ENCODE measurements at regions of chr20 and their contacts with region 1.

Region 1: GRCh38 chr20:35490736-35491181 is 35.4 kb downstream of the CEP250 start:
- DNase-seq: peak; percentile 87
- ATAC-seq: peak; percentile 96
- H3K4me3 Mint-ChIP-seq: peak overlapping the region; percentile 99
- H3K27ac Mint-ChIP-seq: peak overlapping the region; percentile 99
- H3K4me1 Mint-ChIP-seq: peaks cover 53% of the 10 kb centered on the region
- H3K27me3 Mint-ChIP-seq: no peaks in the 10 kb centered on the region

Region 2: DNA sequence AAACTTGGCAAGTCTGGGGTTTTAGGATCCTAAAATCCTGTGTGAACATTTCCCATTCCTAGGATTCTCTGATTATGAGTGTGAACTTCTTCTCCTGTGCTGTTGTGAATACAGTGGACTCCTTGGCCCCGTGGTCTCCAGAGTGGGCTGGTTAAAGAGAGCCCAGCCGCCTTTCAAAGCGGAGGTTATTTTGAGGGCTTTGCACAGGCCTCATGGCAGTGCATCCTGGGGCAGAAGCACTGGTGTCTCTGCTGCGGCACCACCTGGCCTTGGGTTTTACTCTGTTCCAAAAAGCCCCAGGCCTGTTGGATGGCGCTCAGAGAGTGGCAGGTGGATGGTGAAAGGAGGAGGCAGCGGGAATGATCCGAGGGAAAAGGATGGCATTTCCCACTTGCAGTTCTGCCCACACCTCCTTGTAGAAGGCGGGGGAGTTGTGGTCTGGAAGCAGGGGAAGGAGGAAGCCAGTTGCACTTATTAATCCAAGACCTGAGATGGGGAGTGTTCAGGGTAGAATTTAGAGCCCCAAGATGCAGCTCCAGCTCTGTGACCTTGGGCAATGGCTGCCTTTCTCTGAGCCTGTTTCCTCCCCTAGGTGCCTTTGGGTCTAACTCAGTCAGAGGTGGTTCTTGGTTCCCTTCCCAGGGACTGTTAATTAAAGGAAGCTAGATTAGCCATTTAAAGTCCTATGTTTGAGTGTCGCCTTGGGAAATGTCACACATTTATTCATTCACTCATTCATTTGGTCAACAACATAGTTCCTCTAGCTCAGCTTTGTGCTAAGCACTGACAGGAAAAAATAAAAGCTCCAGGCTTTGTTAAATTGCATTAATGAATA is 241.9 kb before region 1 on chr20:
- CTCF ChIA-PET with region 1: no interaction called
- POLR2A ChIA-PET with region 1: no interaction called
- DNase-seq: no peak
- ATAC-seq: no peak
- H3K4me3 Mint-ChIP-seq: no peak overlapping the region
- H3K27ac Mint-ChIP-seq: no peak overlapping the region
- H3K4me1 Mint-ChIP-seq: peaks cover 31% of the 10 kb centered on the region
- H3K27me3 Mint-ChIP-seq: no peaks in the 10 kb centered on the region

Region 3: DNA sequence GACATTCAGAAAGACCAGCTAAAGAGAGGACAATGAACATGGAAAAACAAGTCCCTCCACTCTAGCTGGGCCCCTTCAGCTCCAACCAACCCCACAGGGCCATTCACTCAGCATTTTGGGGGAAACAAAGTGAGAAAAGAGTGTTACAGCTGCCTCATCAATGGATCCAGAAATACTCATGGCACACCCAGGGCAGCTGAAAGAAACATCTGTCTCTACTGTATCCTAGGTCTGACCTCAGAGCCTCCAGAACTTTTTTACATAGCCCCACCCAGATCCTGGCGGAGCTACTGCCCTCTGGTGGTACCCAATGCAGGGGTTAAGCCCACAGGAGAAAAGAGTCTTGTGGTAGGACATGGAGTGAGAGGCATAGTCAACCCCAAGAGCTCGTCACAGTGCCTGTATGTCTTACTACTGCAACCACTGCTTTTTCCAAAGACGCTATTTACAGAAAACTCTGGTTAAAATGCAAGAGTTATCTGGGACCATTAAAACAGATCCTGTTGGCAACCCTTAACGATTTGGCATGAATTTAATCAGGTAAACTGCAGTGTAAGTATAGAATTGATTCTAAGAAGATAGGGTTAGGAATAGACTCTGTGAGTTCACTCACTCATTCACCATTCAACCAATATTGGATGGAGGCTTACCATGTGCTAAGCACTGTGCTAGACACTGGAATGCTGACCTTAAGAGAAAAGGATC is 161.2 kb before region 1 on chr20:
- CTCF ChIA-PET with region 1: no interaction called
- POLR2A ChIA-PET with region 1: no interaction called
- DNase-seq: peak; percentile 60
- ATAC-seq: peak; percentile 90
- H3K4me3 Mint-ChIP-seq: no peak overlapping the region
- H3K27ac Mint-ChIP-seq: no peak overlapping the region
- H3K4me1 Mint-ChIP-seq: peaks cover 3% of the 10 kb centered on the region
- H3K27me3 Mint-ChIP-seq: no peaks in the 10 kb centered on the region

Region 4: GRCh38 chr20:35454881-35455609 is 35.7 kb before region 1 on chr20 and contains the start of gene CEP250:
- CTCF ChIA-PET with region 1: interaction called, 4 read pairs
- POLR2A ChIA-PET with region 1: interaction called, 40 read pairs
- DNase-seq: peak; percentile 96
- ATAC-seq: peak; percentile 98
- H3K4me3 Mint-ChIP-seq: peak within 1 kb of the TSS; percentile 89
- H3K27ac Mint-ChIP-seq: peak within 1 kb of the TSS; percentile 98
- H3K4me1 Mint-ChIP-seq: peaks cover 33% of the 10 kb centered on the region
- H3K27me3 Mint-ChIP-seq: no peaks in the 10 kb centered on the region
- total RNA-seq, gene CEP250: 72.1 to 74.5 TPM

Region 5: GRCh38 chr20:35478804-35479472 is 11.8 kb before region 1 on chr20:
- CTCF ChIA-PET with region 1: interaction called, 4 read pairs
- POLR2A ChIA-PET with region 1: interaction called, 16 read pairs
- DNase-seq: peak; percentile 26
- ATAC-seq: no peak
- H3K4me3 Mint-ChIP-seq: no peak overlapping the region
- H3K27ac Mint-ChIP-seq: no peak overlapping the region
- H3K4me1 Mint-ChIP-seq: peaks cover 2% of the 10 kb centered on the region
- H3K27me3 Mint-ChIP-seq: no peaks in the 10 kb centered on the region

Region 6: DNA sequence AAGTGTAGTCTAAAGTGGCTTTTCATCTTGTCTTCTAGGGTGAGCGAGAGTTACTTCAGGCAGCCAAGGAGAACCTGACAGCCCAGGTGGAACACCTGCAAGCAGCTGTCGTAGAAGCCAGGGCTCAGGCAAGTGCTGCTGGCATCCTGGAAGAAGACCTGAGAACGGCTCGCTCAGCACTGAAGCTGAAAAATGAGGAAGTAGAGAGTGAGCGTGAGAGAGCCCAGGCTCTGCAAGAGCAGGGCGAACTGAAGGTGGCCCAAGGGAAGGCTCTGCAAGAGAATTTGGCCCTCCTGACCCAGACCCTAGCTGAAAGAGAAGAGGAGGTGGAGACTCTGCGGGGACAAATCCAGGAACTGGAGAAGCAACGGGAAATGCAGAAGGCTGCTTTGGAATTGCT is 11.6 kb after region 1 on chr20:
- CTCF ChIA-PET with region 1: interaction called, 3 read pairs
- POLR2A ChIA-PET with region 1: interaction called, 24 read pairs
- DNase-seq: no peak
- ATAC-seq: no peak
- H3K4me3 Mint-ChIP-seq: no peak overlapping the region
- H3K27ac Mint-ChIP-seq: no peak overlapping the region
- H3K4me1 Mint-ChIP-seq: peaks cover 40% of the 10 kb centered on the region
- H3K27me3 Mint-ChIP-seq: no peaks in the 10 kb centered on the region

Region 7: GRCh38 chr20:35541783-35542588 is 51.2 kb after region 1 on chr20 and contains the start of gene ERGIC3:
- CTCF ChIA-PET with region 1: no interaction called
- POLR2A ChIA-PET with region 1: interaction called, 10 read pairs
- DNase-seq: peak; percentile 98
- ATAC-seq: peak; percentile 96
- H3K4me3 Mint-ChIP-seq: peak within 1 kb of the TSS; percentile 88
- H3K27ac Mint-ChIP-seq: peak within 1 kb of the TSS; percentile 90
- H3K4me1 Mint-ChIP-seq: peaks cover 23% of the 10 kb centered on the region
- H3K27me3 Mint-ChIP-seq: no peaks in the 10 kb centered on the region
- total RNA-seq, gene ERGIC3: 114 to 122 TPM

Region 8: DNA sequence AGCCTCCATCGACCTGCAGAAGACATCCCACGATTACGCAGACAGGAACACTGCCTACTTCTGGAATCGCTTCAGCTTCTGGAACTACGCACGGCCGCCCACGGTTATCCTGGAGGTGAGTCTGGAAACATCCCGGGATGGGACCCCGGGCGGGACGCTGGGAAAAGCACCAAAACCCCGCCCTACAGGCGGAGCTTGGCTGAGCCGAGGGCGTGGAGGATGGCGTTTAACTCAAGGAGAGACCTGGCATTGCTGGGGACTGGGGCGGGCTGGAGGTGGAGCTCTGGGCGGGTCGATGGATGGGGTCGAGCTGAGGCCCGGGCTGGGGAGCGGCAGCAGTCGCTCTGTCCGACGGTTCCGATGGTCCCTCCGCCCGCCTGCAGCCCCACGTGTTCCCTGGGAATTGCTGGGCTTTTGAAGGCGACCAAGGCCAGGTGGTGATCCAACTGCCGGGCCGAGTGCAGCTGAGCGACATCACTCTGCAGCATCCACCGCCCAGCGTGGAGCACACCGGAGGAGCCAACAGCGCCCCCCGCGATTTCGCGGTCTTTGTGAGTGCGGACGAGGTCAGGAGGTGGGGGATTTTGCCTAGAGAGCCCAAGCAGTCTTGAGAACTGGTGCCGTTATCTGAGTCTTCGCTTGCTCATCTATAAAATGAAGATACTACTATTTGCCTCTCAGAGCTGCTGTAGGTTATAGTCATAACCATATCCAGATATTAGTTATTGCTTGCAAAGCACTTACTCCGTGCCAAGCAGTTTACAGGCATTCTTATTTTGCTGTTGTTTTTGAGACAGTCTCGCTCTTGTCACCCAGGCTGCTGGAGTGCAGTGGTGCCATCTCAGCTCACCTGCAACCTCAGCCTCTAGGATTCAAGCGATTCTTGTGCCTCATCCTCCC is 128.7 kb after region 1 on chr20:
- CTCF ChIA-PET with region 1: interaction called, 10 read pairs
- POLR2A ChIA-PET with region 1: interaction called, 23 read pairs
- DNase-seq: peak; percentile 83
- ATAC-seq: peak; percentile 41
- H3K4me3 Mint-ChIP-seq: peak overlapping the region; percentile 84
- H3K27ac Mint-ChIP-seq: peak overlapping the region; percentile 81
- H3K4me1 Mint-ChIP-seq: peaks cover 37% of the 10 kb centered on the region
- H3K27me3 Mint-ChIP-seq: peaks cover 1% of the 10 kb centered on the region

Region 9: GRCh38 chr20:35664544-35665221 is 173.9 kb after region 1 on chr20 and contains the starts of genes CPNE1 and RBM12:
- CTCF ChIA-PET with region 1: no interaction called
- POLR2A ChIA-PET with region 1: interaction called, 14 read pairs
- DNase-seq: peak; percentile 96
- ATAC-seq: peak; percentile 80
- H3K4me3 Mint-ChIP-seq: peak within 1 kb of the TSS; percentile 96
- H3K27ac Mint-ChIP-seq: peak within 1 kb of the TSS; percentile 99
- H3K4me1 Mint-ChIP-seq: peaks cover 38% of the 10 kb centered on the region
- H3K27me3 Mint-ChIP-seq: no peaks in the 10 kb centered on the region
- total RNA-seq, gene CPNE1: 271 to 272 TPM
- total RNA-seq, gene RBM12: 112 to 119 TPM